Left ventricle myocardium inferior (tissue), 1 donor: ENCODE measurements at regions of chr15 and their contacts with region 1.

Region 1: GRCh38 chr15:99565299-99566156 is at the start of gene MEF2A:
- DNase-seq: peak; percentile 97
- H3K4me3 ChIP-seq: peak within 1 kb of the TSS; percentile 83
- H3K27ac ChIP-seq: peak within 1 kb of the TSS; percentile 100
- H3K4me1 ChIP-seq: peaks cover 56% of the 10 kb centered on the region
- H3K27me3 ChIP-seq: no peaks in the 10 kb centered on the region
- CTCF ChIP-seq: no peak
- total RNA-seq, gene MEF2A: 152 TPM

Region 2: GRCh38 chr15:98904544-98904943 is 661.0 kb before region 1 on chr15:
- intact Hi-C with region 1: no loop called
- DNase-seq: no peak
- H3K4me3 ChIP-seq: no peak overlapping the region
- H3K27ac ChIP-seq: peak overlapping the region; percentile 17
- H3K4me1 ChIP-seq: peaks cover 43% of the 10 kb centered on the region
- H3K27me3 ChIP-seq: no peaks in the 10 kb centered on the region
- CTCF ChIP-seq: peak; percentile 62

Region 3: GRCh38 chr15:99704444-99704838 is 138.9 kb after region 1 on chr15:
- intact Hi-C with region 1: loop called (anchors 10 kb)
- DNase-seq: no peak
- H3K4me3 ChIP-seq: peak overlapping the region; percentile 37
- H3K27ac ChIP-seq: peak overlapping the region; percentile 90
- H3K4me1 ChIP-seq: peaks cover 71% of the 10 kb centered on the region
- H3K27me3 ChIP-seq: no peaks in the 10 kb centered on the region
- CTCF ChIP-seq: peak; percentile 82